A673 (cell line): ENCODE measurements at regions of chr15 and their contacts with region 1.

Region 1: DNA sequence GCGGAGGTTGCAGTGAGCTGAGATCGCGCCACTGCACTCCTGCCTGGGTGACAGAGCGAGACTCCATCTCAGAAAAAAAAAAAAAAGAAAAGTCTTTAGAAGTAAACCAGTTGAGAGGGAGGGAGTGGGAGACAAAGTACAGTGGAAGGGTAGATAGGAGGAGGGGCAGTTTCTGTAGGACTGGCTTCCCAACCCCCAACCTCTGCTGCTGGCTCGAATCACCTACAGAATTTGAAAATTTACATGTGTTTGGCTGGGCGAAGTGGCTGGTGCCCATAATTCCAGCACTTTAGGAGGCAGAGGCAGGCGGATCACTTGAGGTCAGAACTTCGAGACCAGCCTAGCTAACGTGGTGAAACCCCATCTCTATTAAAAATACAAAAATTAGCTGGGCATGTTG is 24.1 kb upstream of the SEMA4B start:
- DNase-seq: no peak
- H3K4me3 ChIP-seq: no peak overlapping the region
- H3K27ac ChIP-seq: no peak overlapping the region
- H3K4me1 ChIP-seq: peaks cover 6% of the 10 kb centered on the region
- H3K27me3 ChIP-seq: no peaks in the 10 kb centered on the region
- CTCF ChIP-seq: no peak

Region 2: DNA sequence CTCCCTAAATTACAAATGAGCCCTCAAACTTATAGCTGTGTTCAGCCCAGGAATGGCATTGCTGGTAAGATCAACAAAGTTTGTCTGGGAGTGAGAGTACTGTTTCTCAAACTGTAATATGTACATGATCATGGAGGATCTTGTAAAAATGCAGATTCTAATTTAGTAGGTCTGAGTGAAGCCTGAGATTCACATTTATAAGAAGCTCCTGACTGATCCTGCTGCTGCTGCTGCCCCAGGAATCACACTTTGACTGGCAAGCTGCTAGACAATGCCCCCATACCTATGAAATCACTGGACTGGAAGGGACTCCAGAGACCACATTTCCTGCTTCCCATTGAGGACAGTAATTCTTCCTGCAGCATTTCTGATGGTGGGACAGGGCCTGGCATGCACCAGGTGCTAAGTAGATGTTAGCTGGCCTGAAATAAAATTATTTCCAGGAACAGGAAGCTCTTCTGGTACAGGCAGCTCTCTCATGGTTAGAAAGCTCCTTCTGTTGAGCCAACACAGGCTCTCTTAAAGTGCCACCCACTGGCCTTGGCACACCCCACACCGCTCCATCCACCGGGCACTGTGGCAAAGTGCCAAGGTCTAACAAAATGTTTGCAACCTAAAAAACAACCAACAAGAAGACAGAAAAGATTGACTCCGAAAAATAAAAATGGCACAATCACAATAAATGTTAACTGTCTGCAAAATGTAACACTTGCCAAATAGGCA is 212.6 kb before region 1 on chr15:
- CTCF ChIA-PET with region 1: no interaction called
- POLR2A ChIA-PET with region 1: no interaction called
- intact Hi-C with region 1: no loop called
- DNase-seq: no peak
- H3K4me3 ChIP-seq: no peak overlapping the region
- H3K27ac ChIP-seq: no peak overlapping the region
- H3K4me1 ChIP-seq: no peaks in the 10 kb centered on the region
- H3K27me3 ChIP-seq: no peaks in the 10 kb centered on the region
- CTCF ChIP-seq: no peak

Region 3: DNA sequence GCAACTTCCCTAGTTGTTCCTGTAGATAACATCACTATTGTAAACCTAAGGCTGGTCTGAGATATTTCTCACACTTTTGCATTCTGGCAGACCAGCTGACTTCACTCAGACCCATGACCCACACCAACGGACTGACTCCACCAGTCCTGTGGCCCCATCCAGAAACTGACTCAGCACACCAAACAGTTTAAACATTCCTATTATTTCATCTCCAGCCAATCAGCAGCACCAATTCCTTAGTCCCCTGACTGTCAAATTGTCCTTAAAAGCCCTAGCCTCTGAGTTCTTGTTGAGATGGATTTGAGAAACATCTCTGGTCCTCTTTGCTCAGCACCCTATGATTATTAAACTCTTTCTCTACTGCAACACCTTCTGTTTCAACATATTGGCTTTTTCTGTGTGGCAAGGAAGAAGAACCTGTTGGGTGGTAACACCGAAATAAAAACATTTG is 62.5 kb before region 1 on chr15:
- CTCF ChIA-PET with region 1: no interaction called
- POLR2A ChIA-PET with region 1: no interaction called
- intact Hi-C with region 1: no loop called
- DNase-seq: no peak
- H3K4me3 ChIP-seq: no peak overlapping the region
- H3K27ac ChIP-seq: no peak overlapping the region
- H3K4me1 ChIP-seq: no peaks in the 10 kb centered on the region
- H3K27me3 ChIP-seq: no peaks in the 10 kb centered on the region
- CTCF ChIP-seq: no peak

Region 4: GRCh38 chr15:90512276-90512675 is 335.3 kb after region 1 on chr15:
- CTCF ChIA-PET with region 1: no interaction called
- POLR2A ChIA-PET with region 1: no interaction called
- intact Hi-C with region 1: no loop called
- DNase-seq: no peak
- H3K4me3 ChIP-seq: no peak overlapping the region
- H3K27ac ChIP-seq: no peak overlapping the region
- H3K4me1 ChIP-seq: no peaks in the 10 kb centered on the region
- H3K27me3 ChIP-seq: no peaks in the 10 kb centered on the region
- CTCF ChIP-seq: no peak

Region 5: DNA sequence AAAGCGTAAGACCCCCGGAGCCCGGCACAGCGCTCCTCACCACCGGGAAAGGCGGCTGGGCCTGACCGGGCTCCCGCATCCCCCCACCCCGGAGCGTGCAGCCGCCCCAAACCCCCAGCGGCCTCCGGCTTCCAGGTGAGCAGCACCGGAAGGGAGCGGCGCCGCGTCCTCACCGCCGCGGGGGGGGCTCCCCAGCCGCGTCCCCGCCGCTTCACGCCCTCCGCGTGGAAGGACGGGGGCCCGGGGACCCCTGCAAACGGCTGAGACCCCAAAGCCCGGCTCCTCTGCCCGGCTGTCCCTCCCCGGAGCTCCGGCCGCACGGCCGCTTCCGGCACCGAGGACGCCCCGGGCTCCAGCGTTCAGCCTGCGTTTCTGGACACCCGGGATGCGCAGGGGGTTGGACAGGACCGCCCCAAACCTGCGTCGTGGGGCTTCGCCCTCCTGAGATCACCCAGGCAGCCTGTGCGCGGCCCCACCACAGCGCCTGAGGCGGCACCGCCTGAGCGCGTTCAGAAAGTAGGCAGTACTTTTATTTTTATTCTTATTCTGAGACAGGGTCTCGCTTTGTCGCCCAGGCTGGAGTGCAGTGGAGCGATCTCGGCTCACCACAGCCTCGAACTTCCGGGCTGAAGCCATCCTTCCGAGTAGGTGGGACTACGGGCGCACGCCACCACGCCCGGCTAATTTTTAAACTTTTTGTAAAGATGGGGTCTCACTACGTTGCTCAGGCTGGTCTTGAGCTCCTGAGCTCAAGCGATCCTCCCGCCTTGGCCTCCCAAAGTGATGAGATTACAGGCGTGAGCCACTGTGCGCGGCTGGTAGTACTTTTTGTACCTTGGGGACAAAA is 488.5 kb after region 1 on chr15:
- CTCF ChIA-PET with region 1: no interaction called
- POLR2A ChIA-PET with region 1: interaction called, 12 read pairs
- intact Hi-C with region 1: no loop called
- DNase-seq: peak; percentile 58
- H3K4me3 ChIP-seq: peak overlapping the region; percentile 51
- H3K27ac ChIP-seq: peak overlapping the region; percentile 71
- H3K4me1 ChIP-seq: peaks cover 52% of the 10 kb centered on the region
- H3K27me3 ChIP-seq: no peaks in the 10 kb centered on the region
- CTCF ChIP-seq: no peak